ENCODE measurements at regions of chr17 and their contacts with region 1.

Region 1: DNA sequence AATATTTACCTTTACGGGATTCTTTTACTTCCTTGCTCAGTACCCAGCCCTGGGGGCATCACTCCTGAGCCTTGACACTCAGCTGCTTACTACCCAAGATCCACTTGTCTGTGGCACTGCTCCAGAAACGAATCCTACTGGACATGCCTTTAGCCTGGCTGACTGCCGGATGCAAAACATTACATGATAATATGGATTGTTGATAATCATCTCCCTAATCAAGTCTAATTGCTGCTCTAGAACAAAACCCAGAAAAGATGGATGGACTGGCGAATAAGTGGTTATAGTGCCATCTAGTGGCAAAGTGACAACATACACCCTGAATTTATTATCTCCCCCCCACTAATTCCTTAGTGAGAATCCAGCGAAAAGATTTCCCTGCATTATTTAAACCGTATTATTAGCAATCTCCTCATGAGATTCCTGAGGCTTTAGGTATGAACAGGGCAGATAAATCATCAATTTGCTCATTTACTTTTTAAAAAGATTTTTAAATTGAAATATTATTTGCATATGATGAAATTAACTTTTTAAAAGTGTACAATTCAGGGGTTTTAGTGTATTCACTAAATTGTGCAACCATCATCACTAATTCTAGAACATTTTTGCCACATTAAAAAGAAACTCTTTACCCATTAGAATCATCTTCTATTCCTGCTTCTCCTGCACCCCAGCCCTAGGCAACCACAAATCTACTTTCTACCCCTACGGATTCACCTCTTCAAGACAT is 61.6 kb downstream of the RGS9 start:
- DNase-seq: peak; percentile 81
- H3K4me3 ChIP-seq: no peak overlapping the region
- H3K27ac ChIP-seq: no peak overlapping the region
- H3K4me1 ChIP-seq: peaks cover 20% of the 10 kb centered on the region
- CTCF ChIP-seq: peak; percentile 98

Region 2: DNA sequence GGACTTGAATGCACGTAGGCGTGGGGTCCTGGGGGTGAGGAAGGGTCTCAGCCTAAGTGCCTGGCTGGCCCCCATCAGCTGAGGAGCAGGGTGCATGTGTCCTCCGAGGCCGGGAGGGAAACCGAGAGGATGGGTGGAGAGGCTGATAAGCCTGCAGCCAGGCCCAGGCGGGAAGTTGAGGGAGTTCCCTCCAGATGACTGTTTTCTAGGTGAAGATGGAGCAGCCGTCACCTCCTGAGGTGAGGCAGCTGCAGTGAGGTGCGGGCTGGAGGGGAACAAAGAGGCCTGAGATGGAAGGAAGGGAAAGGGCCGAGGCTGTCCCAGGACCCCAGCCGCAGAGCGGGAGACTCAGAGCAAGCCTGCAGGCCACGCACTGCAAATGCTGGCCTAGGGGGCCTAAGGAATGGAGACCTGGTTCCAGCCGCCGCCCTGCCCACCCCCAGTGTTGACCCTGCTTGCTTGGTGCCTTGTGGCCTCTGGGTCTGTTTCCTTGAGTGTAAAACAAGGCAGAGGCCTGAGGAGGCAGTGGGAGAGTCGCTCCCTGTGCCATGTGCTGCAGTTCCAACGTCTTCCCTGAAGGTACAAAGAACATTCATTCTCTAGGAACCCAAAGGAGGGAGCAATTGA is 811.2 kb before region 1 on chr17:
- CTCF ChIA-PET with region 1: no interaction called
- POLR2A ChIA-PET with region 1: no interaction called
- intact Hi-C with region 1: no loop called
- DNase-seq: no peak
- H3K4me3 ChIP-seq: no peak overlapping the region
- H3K27ac ChIP-seq: no peak overlapping the region
- H3K4me1 ChIP-seq: peaks cover 7% of the 10 kb centered on the region
- CTCF ChIP-seq: no peak

Region 3: GRCh38 chr17:64773836-64774761 is 424.7 kb before region 1 on chr17:
- CTCF ChIA-PET with region 1: no interaction called
- POLR2A ChIA-PET with region 1: interaction called, 4 read pairs
- intact Hi-C with region 1: loop called (anchors 10 kb)
- DNase-seq: peak; percentile 70
- H3K4me3 ChIP-seq: peak overlapping the region; percentile 60
- H3K27ac ChIP-seq: no peak overlapping the region
- H3K4me1 ChIP-seq: peaks cover 49% of the 10 kb centered on the region
- CTCF ChIP-seq: peak; percentile 68

Region 4: GRCh38 chr17:65047942-65048341 is 150.9 kb before region 1 on chr17:
- CTCF ChIA-PET with region 1: no interaction called
- POLR2A ChIA-PET with region 1: no interaction called
- intact Hi-C with region 1: no loop called
- DNase-seq: no peak
- H3K4me3 ChIP-seq: peak overlapping the region; percentile 19
- H3K27ac ChIP-seq: peak overlapping the region; percentile 44
- H3K4me1 ChIP-seq: peaks cover 99% of the 10 kb centered on the region
- CTCF ChIP-seq: no peak

Region 5: DNA sequence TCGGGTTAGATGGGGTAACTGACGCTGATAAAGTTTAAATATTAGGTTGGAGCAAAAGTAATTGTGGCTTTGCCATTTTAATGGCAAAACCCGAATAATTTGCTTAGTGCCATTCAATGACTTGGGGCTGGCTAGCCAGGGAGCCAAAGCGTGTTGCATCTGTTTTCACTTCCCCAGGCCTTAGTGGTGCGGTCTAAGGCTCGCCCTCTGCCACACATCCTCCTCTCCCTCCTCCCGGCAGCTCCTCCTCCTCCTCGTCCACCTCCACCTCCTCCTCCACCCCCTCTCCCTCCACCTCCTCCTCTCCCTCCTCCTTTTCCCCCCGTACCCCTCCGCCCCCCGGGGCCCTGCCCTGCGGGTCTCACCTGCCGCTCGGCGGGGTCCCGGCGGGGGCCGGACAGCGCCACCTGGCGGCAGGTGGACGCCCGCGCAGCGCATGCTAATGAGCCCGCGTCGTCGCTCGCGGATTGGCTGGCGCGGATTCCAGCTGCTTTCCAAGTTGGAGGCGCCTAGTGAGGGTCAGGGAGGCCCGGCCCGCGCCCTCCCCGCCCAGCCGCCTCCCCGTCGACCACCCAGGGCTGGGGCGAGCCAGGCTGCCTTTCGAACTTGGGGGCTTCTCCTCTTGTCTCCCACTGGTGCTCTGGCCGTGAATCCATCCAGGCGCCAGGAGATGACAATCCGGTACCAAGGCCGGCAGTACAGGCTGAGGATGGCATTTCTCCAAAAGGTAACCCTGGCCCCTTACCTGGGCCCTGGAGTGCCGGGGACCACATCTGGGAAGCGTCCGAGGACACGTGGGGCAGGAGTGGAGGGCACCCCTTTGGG is 98.3 kb before region 1 on chr17:
- CTCF ChIA-PET with region 1: no interaction called
- POLR2A ChIA-PET with region 1: no interaction called
- intact Hi-C with region 1: loop called (anchors 2 kb)
- DNase-seq: peak; percentile 91
- H3K4me3 ChIP-seq: peak overlapping the region; percentile 73
- H3K27ac ChIP-seq: peak overlapping the region; percentile 81
- H3K4me1 ChIP-seq: peaks cover 41% of the 10 kb centered on the region
- CTCF ChIP-seq: peak; percentile 91

Region 6: DNA sequence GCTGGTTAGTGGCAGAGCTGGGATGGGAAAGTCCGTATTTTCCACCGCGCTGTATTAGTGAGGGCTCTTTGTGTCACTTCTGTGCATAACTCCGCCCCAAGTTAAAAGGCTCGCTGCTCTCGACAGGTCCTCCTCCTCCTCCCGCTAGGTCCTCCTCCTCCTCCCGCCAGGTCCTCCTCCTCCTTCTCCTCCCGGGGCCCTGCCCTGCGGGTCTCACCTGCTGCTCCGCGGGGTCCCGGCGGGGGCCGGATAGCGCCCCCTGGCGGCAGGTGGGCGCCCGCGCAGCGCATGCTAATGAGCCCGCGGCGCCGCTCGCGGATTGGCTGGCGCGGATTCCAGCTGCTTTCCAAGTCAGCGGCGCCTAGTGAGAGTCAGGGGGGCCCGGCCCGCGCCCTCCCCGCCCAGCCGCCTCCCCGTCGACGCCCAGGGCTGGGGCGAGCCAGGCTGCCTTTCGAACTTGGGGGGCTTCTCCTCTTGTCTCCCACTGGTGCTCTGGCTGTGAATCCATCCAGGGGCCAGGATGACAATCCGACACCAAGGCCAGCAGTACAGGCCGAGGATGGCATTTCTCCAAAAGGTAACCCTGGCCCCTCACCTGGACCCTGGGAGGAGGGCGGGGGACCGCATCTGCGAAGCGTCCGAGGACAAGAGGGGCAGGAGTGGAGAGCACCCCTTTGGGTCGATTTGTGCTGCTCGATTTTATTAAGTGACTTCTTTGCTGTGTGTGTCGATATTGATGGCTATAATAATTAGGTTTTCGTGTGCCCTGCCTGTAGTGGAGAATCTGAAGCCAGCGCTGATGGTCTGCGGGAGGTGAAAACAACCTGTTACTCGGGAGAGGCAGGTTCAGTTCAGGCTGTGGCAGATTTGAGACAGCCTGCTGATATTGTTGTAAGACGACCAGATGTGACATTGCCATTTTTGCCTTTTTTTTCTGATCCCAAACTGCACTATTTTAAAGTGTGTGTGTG is 61.5 kb before region 1 on chr17 and contains the start of gene RGS9:
- CTCF ChIA-PET with region 1: interaction called, 3 read pairs
- POLR2A ChIA-PET with region 1: interaction called, 3 read pairs
- intact Hi-C with region 1: loop called (anchors 1 kb)
- DNase-seq: peak; percentile 88
- H3K4me3 ChIP-seq: peak within 1 kb of the TSS; percentile 68
- H3K27ac ChIP-seq: no peak within 1 kb of the TSS
- H3K4me1 ChIP-seq: peaks cover 38% of the 10 kb centered on the region
- CTCF ChIP-seq: peak; percentile 94
- total RNA-seq, gene RGS9: 12.9 and 13.7 TPM in 2 replicates

Region 7: DNA sequence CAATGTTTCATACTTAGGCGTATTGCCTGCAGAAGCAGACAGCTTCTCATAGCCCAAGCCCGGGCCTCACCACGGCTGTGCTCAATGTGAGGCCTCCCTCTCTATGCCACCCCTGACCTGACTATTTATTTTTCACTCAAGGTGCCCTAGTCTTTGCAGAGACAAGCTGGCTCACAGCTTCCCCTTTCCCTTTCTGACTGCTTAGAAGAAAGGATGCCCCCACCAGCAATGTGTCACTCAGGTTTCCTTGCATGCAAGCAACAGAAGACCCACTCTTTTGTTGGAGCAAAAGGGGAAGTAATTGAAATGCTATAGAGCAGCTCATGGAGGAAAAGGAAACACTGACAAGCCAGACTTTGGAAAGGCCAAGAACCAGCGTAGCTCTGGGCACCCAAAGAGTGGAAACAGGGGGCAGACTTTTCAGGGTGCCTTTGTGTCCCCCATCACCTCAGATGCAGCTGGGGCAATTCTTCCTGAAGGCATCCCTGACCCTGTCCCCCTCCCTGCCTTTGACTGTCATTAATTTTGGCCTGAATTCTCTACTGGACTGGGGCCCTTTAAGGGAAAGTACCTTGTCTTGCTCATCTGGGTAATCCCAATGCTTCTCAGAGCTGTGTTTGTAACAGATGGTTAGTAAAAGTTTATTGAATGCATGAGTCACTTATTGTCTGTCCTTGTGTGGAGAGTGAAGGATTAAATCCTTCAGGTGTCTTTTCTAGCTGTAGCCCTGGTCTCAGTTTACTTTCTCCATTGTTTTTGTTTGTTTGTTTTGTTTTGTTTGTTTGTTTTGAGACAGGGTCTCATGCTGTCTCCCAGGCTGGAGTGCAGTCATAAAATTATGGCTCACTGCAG is 43.8 kb before region 1 on chr17:
- CTCF ChIA-PET with region 1: no interaction called
- POLR2A ChIA-PET with region 1: no interaction called
- intact Hi-C with region 1: no loop called
- DNase-seq: peak; percentile 84
- H3K4me3 ChIP-seq: peak overlapping the region; percentile 39
- H3K27ac ChIP-seq: peak overlapping the region; percentile 72
- H3K4me1 ChIP-seq: peaks cover 27% of the 10 kb centered on the region
- CTCF ChIP-seq: no peak; the same call in 1 of the 2 replicates